ENCODE measurements at regions of chr14 and their contacts with region 1.

Region 1: DNA sequence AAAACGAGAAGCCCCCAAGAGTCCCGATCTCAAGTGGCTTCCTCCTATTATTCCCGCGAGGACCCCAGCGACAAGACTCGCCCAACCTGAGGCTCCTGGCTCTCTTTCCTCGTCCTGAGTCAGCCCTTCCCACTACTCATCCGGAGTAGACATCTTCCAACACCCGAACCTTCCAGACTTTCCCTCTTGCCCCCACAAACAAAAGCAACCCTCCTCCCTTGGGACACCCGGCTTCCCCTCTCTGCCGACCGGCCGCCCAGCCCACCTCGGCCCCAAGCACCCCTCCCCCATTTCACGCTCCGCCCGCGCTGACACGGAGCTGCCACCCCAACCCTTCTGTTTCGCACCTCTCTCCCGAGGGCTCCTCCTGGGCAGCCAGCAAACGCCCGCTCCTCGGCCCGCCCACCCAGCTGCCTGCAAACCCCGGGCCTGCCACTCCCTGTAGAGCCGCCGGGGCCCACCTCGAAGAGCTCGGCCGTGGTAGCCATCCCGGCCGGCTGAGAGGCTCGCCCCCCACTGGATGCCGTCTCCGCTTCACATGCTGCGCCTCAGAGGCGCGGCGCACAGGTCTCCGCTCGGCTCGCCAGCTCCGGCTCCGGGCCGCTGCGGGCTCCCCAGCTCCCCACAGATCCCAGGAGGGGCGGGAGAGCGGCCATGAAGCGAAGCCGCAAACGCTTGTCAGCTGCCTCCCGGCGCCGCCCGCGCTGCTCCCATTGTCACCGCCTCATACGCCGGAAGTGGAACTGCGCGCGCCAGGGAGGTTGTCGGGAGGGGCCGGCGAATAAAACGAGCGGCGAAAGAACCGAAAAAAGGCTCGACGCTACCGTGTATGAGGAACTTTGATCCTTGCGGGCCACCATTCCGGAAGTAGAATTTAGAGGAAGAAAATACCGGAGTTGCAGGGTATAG is at the starts of genes AP5M1 and EXOC5:
- DNase-seq: peak; percentile 90
- H3K4me3 ChIP-seq: peak within 1 kb of the TSS; percentile 79 to 98 (median 79)
- H3K27ac ChIP-seq: peak within 1 kb of the TSS; percentile 95
- H3K4me1 ChIP-seq: peaks cover 26% of the 10 kb centered on the region
- H3K27me3 ChIP-seq: no peaks in the 10 kb centered on the region
- CTCF ChIP-seq: no peak
- POLR2A ChIP-seq: peak; percentile 10
- total RNA-seq, gene AP5M1: 38.7 and 39.6 TPM in 2 replicates
- total RNA-seq, gene EXOC5: 95.0 and 104 TPM in 2 replicates

Region 2: GRCh38 chr14:57221931-57222330 is 46.5 kb before region 1 on chr14:
- CTCF ChIA-PET with region 1: no interaction called
- POLR2A ChIA-PET with region 1: no interaction called
- dilution Hi-C with region 1: no loop called
- intact Hi-C with region 1: loop called (anchors 5 kb)
- DNase-seq: no peak
- H3K4me3 ChIP-seq: no peak overlapping the region
- H3K27ac ChIP-seq: no peak overlapping the region
- H3K4me1 ChIP-seq: peaks cover 12% of the 10 kb centered on the region
- H3K27me3 ChIP-seq: no peaks in the 10 kb centered on the region
- CTCF ChIP-seq: no peak
- POLR2A ChIP-seq: no peak

Region 3: GRCh38 chr14:57254884-57255283 is 13.5 kb before region 1 on chr14:
- CTCF ChIA-PET with region 1: interaction called, 3 read pairs
- POLR2A ChIA-PET with region 1: no interaction called
- dilution Hi-C with region 1: no loop called
- intact Hi-C with region 1: loop called (anchors 2 kb)
- DNase-seq: no peak
- H3K4me3 ChIP-seq: no peak overlapping the region
- H3K27ac ChIP-seq: no peak overlapping the region
- H3K4me1 ChIP-seq: peaks cover 8% of the 10 kb centered on the region
- H3K27me3 ChIP-seq: no peaks in the 10 kb centered on the region
- CTCF ChIP-seq: no peak
- POLR2A ChIP-seq: no peak

Region 4: GRCh38 chr14:57362361-57362760 is 93.9 kb after region 1 on chr14:
- CTCF ChIA-PET with region 1: interaction called, 3 read pairs
- POLR2A ChIA-PET with region 1: interaction called, 8 read pairs
- dilution Hi-C with region 1: no loop called
- intact Hi-C with region 1: loop called (anchors 1 kb)
- DNase-seq: peak; percentile 94
- H3K4me3 ChIP-seq: no peak overlapping the region
- H3K27ac ChIP-seq: peak overlapping the region; percentile 89
- H3K4me1 ChIP-seq: peaks cover 28% of the 10 kb centered on the region
- H3K27me3 ChIP-seq: no peaks in the 10 kb centered on the region
- CTCF ChIP-seq: no peak
- POLR2A ChIP-seq: peak; percentile 77

Region 5: DNA sequence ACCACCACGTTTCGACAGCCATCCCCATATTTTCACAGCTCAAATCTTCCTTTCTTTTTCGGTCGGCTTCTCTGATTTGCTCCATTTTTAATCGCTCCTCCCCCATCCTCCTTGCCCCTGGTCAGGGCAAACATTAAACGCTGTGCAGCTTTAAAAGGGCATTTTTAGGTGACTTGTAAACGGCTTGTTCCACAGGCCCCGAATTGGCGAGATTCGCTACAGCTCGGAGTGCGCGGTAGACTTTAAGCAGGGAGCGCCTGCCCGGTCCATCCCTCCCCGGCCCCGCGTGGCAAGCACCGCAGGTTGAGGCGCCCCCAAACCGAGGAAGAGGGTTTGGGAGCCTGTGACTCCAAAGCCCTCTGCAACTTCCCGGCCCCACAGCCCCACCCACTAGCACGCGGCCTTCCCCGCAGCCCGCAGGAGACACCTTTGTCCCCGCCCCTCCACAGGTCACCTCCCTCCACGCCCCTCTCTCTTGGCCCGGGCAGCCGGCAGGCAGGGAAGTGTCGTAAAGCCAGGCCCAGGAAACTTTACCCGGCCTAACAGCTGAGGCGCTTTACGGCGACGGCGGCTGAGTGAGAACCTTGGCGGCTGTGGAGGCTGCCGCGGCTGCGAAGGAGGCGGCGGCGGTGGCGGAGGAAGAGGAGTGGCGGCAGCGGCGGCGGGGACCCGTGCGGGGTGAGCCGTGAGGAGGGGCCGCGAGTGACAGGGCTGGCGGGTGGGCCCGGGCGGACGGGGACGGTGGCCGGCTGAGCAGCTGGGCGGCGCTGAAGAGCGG is 121.8 kb after region 1 on chr14 and contains the start of gene NAA30:
- CTCF ChIA-PET with region 1: interaction called, 5 read pairs
- POLR2A ChIA-PET with region 1: interaction called, 3 read pairs
- dilution Hi-C with region 1: no loop called
- intact Hi-C with region 1: loop called (anchors 1 kb)
- DNase-seq: peak; percentile 92
- H3K4me3 ChIP-seq: peak within 1 kb of the TSS; percentile 36 to 95 (median 94)
- H3K27ac ChIP-seq: peak within 1 kb of the TSS; percentile 56
- H3K4me1 ChIP-seq: peaks cover 20% of the 10 kb centered on the region
- H3K27me3 ChIP-seq: no peaks in the 10 kb centered on the region
- CTCF ChIP-seq: no peak
- POLR2A ChIP-seq: peak; percentile 13
- total RNA-seq, gene NAA30: 21.8 and 22.1 TPM in 2 replicates

Region 6: DNA sequence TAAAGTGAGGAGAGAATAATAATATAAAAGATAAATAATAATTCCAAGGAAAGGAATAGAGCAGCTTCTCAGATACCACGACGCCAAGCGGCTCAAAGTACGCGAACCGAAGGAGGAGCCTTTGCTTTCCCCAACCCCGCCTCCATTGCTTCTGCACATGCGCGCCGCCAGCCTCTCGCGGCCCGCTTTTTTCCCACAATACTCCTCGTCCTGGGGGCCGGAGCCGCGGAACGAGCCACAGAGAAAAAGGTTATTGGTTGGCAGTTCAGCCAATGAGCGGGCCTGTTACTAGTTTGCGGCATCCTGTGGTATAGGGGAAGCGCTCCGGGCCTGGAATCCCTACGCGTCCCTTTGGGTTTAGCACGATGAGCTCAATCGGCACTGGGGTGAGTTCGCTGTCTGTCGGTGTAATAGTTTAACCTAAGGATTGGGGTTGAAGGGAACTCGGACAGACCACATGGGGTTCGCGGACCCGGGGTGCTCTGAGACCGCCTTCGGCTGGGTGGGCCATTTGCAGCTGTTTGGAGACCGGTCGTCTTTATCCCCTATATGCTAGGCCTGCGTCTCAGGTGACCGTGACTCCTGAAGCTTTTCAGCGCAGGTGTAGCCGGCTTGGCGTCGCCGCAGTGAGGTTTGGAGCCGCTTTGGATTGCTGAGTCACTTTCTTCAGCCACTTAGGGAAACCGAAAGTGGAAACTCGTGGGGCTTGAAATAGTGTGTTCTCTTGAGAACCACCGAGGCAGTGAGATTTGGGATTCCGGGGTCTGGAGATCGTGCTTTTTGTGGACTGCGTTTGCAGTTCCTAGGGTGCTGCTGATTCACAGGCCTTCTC is 976.4 kb after region 1 on chr14 and contains the start of gene PSMA3:
- CTCF ChIA-PET with region 1: no interaction called
- POLR2A ChIA-PET with region 1: no interaction called
- dilution Hi-C with region 1: no loop called
- intact Hi-C with region 1: loop called (anchors 5 kb)
- DNase-seq: peak; percentile 98
- H3K4me3 ChIP-seq: peak within 1 kb of the TSS; percentile 77 to 98 (median 85)
- H3K27ac ChIP-seq: peak within 1 kb of the TSS; percentile 93
- H3K4me1 ChIP-seq: peaks cover 22% of the 10 kb centered on the region
- H3K27me3 ChIP-seq: no peaks in the 10 kb centered on the region
- CTCF ChIP-seq: no peak
- POLR2A ChIP-seq: peak; percentile 95
- total RNA-seq, gene PSMA3: 228 and 240 TPM in 2 replicates

Region 7: GRCh38 chr14:58427281-58428117 is 1159.1 kb after region 1 on chr14 and contains the starts of genes KIAA0586 and TIMM9:
- CTCF ChIA-PET with region 1: no interaction called
- POLR2A ChIA-PET with region 1: no interaction called
- dilution Hi-C with region 1: no loop called
- intact Hi-C with region 1: loop called (anchors 5 kb)
- DNase-seq: peak; percentile 98
- H3K4me3 ChIP-seq: peak within 1 kb of the TSS; percentile 72 to 96 (median 85)
- H3K27ac ChIP-seq: peak within 1 kb of the TSS; percentile 95
- H3K4me1 ChIP-seq: peaks cover 21% of the 10 kb centered on the region
- H3K27me3 ChIP-seq: no peaks in the 10 kb centered on the region
- CTCF ChIP-seq: no peak
- POLR2A ChIP-seq: peak; percentile 88
- total RNA-seq, gene KIAA0586: 25.9 and 29.2 TPM in 2 replicates
- total RNA-seq, gene TIMM9: 38.0 and 42.4 TPM in 2 replicates

Measured in endothelial cell of umbilical vein (primary cell).